HepG2 (cell line): ENCODE measurements at regions of chr5 and their contacts with region 1.

Region 1: GRCh38 chr5:15013654-15014463 is 142.3 kb upstream of the ANKH start:
- DNase-seq: peak; percentile 75
- ATAC-seq: peak; percentile 81
- H3K4me3 ChIP-seq: no peak overlapping the region; a peak in 1 of 6 replicates
- H3K27ac ChIP-seq: no peak overlapping the region
- H3K4me1 ChIP-seq: peaks cover 59% of the 10 kb centered on the region
- H3K27me3 ChIP-seq: no peaks in the 10 kb centered on the region; a peak in 1 of 5 replicates
- CTCF ChIP-seq: peak; percentile 75
- EP300 ChIP-seq: no peak
- POLR2A ChIP-seq: no peak
- RAD21 ChIP-seq: peak; percentile 56; the same call in 1 of the 2 replicates

Region 2: GRCh38 chr5:14685757-14686156 is 328.1 kb before region 1 on chr5:
- CTCF ChIA-PET with region 1: interaction called, 4 read pairs
- POLR2A ChIA-PET with region 1: no interaction called
- in situ Hi-C with region 1: no loop called
- intact Hi-C with region 1: loop called (anchors 1 kb)
- DNase-seq: peak; percentile 48
- ATAC-seq: peak; percentile 63; the same call in 2 of the 3 replicates
- H3K4me3 ChIP-seq: no peak overlapping the region
- H3K27ac ChIP-seq: no peak overlapping the region
- H3K4me1 ChIP-seq: no peaks in the 10 kb centered on the region
- H3K27me3 ChIP-seq: no peaks in the 10 kb centered on the region
- CTCF ChIP-seq: peak; percentile 62
- EP300 ChIP-seq: no peak
- POLR2A ChIP-seq: no peak
- RAD21 ChIP-seq: 0 out of 2 replicates have a peak, but pooled peaks have one; percentile 28

Region 3: DNA sequence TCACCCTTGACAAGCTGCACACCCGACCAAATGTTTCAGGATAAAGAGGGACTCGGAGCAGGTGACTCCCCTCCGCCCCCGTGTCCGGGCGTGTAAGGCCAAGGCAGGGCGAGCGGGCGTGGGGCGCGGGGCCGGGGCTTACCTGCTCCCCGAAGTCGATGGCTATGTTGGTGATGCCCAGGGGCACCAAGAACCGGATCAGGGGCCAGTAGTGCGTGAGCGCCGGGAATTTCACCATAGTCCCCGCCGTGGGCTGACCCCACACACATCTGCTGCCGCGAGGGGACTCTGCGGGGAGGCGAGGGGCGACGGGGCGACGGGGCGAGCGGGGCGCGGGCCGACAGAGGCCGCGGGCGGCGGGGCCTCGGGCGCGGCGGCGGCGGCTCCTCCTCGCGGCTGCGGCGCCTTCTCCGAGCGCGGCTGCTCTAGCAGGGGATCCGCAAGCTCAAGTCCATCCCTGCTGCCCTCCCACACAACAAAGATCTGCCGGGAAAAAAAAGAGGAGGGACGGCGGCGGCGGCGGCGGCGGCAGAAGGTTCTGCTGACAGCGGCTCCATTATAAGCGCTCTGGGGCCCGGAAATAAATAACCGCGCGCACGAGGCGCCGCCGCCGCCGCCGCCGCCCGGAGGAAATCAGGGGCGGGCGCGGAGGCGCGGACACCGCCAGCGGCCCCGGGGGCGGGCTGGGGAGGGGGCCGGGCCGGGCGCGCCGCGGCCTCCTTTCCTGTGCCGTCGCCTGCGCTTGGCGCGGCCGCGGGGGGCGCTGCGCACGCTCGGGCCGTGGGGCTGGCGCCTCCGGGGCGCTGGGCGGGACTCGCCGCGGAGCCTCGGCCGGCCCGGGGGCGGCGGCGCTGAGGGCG is 142.4 kb before region 1 on chr5 and contains the start of gene ANKH:
- CTCF ChIA-PET with region 1: no interaction called
- POLR2A ChIA-PET with region 1: no interaction called
- in situ Hi-C with region 1: loop called (anchors 5 kb)
- intact Hi-C with region 1: no loop called
- DNase-seq: peak; percentile 51
- ATAC-seq: peak; percentile 88
- H3K4me3 ChIP-seq: peak within 1 kb of the TSS; percentile 80 to 93 (median 88)
- H3K27ac ChIP-seq: peak within 1 kb of the TSS; percentile 54
- H3K4me1 ChIP-seq: peaks cover 46% of the 10 kb centered on the region
- H3K27me3 ChIP-seq: no peaks in the 10 kb centered on the region; a peak in 2 of 5 replicates
- CTCF ChIP-seq: no peak; the same call in 1 of the 2 replicates
- EP300 ChIP-seq: no peak
- POLR2A ChIP-seq: no peak
- RAD21 ChIP-seq: no peak
- total RNA-seq, gene ANKH: 20.5 and 25.0 TPM in 2 replicates